IMR-90 (cell line): ENCODE measurements at regions of chr17 and their contacts with region 1.

Region 1: GRCh38 chr17:49997791-49998703 is 3.0 kb upstream of the DLX3 start:
- DNase-seq: peak; percentile 77
- ATAC-seq: peak; percentile 73
- H3K4me3 ChIP-seq: no peak overlapping the region
- H3K27ac ChIP-seq: no peak overlapping the region
- H3K4me1 ChIP-seq: peaks cover 3% of the 10 kb centered on the region; the same call in 1 of the 2 replicates
- H3K27me3 ChIP-seq: peaks cover 73% of the 10 kb centered on the region
- CTCF ChIP-seq: peak; percentile 93
- POLR2A ChIP-seq: no peak
- RAD21 ChIP-seq: peak; percentile 96

Region 2: GRCh38 chr17:49567871-49568694 is 430.0 kb before region 1 on chr17:
- CTCF ChIA-PET with region 1: no interaction called
- POLR2A ChIA-PET with region 1: no interaction called
- dilution Hi-C with region 1: no loop called
- in situ Hi-C with region 1: loop called (anchors 5 kb)
- intact Hi-C with region 1: loop called (anchors 1 kb)
- DNase-seq: peak; percentile 66
- ATAC-seq: peak; percentile 94
- H3K4me3 ChIP-seq: peak overlapping the region; percentile 25
- H3K27ac ChIP-seq: no peak overlapping the region
- H3K4me1 ChIP-seq: no peaks in the 10 kb centered on the region
- H3K27me3 ChIP-seq: peaks cover 44% of the 10 kb centered on the region
- CTCF ChIP-seq: peak; percentile 98
- POLR2A ChIP-seq: 0 out of 2 replicates have a peak, but pooled peaks have one; percentile 43
- RAD21 ChIP-seq: peak; percentile 98

Region 3: DNA sequence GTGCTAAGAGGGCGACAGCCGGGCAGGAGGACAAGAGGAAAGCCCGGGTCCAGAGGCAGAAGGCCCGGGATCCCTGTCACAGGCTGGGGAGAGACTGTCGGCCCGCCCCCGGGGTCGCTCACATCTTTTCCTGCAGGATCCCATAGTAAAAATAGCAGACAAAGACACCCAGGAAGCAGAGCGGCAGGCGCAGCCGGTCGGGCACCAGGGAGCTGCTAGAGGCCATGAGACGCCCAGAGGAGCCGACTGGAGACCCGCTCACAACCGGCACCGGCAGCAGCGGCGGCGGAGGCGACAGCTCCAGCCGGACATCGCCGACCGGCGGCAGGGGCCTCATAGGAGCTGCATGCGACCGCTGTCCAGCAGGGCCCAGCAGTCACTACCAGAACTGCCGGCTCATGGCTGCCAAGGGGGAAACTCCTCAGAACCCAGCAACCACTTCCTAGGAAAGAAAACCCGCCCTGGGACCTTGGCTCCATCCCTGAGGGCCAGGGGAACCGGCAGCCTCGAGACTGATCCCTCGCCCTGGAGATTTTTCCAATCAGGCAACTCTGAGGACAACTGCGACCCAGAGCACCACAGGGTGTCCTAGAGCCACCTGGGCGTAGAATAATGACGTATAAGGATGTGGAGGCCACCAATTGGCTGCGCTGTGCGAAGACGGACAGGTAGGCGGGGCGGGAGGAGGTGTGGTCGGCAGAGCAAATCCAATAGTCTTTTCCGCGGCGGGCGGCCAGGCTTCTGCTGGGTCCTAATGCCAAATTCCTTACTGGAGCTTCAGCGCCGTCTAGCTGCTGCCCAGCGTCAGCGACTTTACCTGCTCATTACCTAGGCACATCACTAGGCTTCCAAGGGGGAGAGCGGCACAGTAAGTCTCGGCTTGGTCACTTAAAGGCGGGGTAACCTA is 290.2 kb before region 1 on chr17 and contains the start of gene SLC35B1:
- CTCF ChIA-PET with region 1: no interaction called
- POLR2A ChIA-PET with region 1: no interaction called
- dilution Hi-C with region 1: no loop called
- in situ Hi-C with region 1: loop called (anchors 10 kb)
- intact Hi-C with region 1: loop called (anchors 2 kb)
- DNase-seq: peak; percentile 99
- ATAC-seq: peak; percentile 100
- H3K4me3 ChIP-seq: peak within 1 kb of the TSS; percentile 80
- H3K27ac ChIP-seq: peak within 1 kb of the TSS; percentile 95
- H3K4me1 ChIP-seq: peaks cover 5% of the 10 kb centered on the region
- H3K27me3 ChIP-seq: no peaks in the 10 kb centered on the region
- CTCF ChIP-seq: peak; percentile 88
- POLR2A ChIP-seq: peak; percentile 82
- RAD21 ChIP-seq: peak; percentile 61
- total RNA-seq, gene SLC35B1: 66.9 and 86.2 TPM in 2 replicates

Region 4: GRCh38 chr17:49880291-49881053 is 117.6 kb before region 1 on chr17:
- CTCF ChIA-PET with region 1: interaction called, 6 read pairs
- POLR2A ChIA-PET with region 1: no interaction called
- dilution Hi-C with region 1: no loop called
- in situ Hi-C with region 1: no loop called
- intact Hi-C with region 1: loop called (anchors 1 kb)
- DNase-seq: peak; percentile 44
- ATAC-seq: peak; percentile 100
- H3K4me3 ChIP-seq: no peak overlapping the region
- H3K27ac ChIP-seq: no peak overlapping the region
- H3K4me1 ChIP-seq: no peaks in the 10 kb centered on the region
- H3K27me3 ChIP-seq: peaks cover 73% of the 10 kb centered on the region
- CTCF ChIP-seq: peak; percentile 77
- POLR2A ChIP-seq: no peak
- RAD21 ChIP-seq: peak; percentile 73

Region 5: GRCh38 chr17:50087246-50087911 is 89.3 kb after region 1 on chr17:
- CTCF ChIA-PET with region 1: no interaction called
- POLR2A ChIA-PET with region 1: no interaction called
- dilution Hi-C with region 1: no loop called
- in situ Hi-C with region 1: no loop called
- intact Hi-C with region 1: loop called (anchors 1 kb)
- DNase-seq: peak; percentile 72
- ATAC-seq: peak; percentile 98
- H3K4me3 ChIP-seq: no peak overlapping the region
- H3K27ac ChIP-seq: no peak overlapping the region
- H3K4me1 ChIP-seq: no peaks in the 10 kb centered on the region
- H3K27me3 ChIP-seq: no peaks in the 10 kb centered on the region
- CTCF ChIP-seq: peak; percentile 97
- POLR2A ChIP-seq: no peak; the same call in 1 of the 2 replicates
- RAD21 ChIP-seq: peak; percentile 98